Endothelial cell of umbilical vein (primary cell): ENCODE measurements at regions of chr1 and their contacts with region 1.

Region 1: GRCh38 chr1:193019442-193020026 is 39.6 kb downstream of the UCHL5 start:
- DNase-seq: peak; percentile 76
- H3K4me3 ChIP-seq: no peak overlapping the region
- H3K27ac ChIP-seq: no peak overlapping the region
- H3K4me1 ChIP-seq: peaks cover 4% of the 10 kb centered on the region
- H3K27me3 ChIP-seq: no peaks in the 10 kb centered on the region
- CTCF ChIP-seq: peak; percentile 12 to 19
- POLR2A ChIP-seq: no peak

Region 2: DNA sequence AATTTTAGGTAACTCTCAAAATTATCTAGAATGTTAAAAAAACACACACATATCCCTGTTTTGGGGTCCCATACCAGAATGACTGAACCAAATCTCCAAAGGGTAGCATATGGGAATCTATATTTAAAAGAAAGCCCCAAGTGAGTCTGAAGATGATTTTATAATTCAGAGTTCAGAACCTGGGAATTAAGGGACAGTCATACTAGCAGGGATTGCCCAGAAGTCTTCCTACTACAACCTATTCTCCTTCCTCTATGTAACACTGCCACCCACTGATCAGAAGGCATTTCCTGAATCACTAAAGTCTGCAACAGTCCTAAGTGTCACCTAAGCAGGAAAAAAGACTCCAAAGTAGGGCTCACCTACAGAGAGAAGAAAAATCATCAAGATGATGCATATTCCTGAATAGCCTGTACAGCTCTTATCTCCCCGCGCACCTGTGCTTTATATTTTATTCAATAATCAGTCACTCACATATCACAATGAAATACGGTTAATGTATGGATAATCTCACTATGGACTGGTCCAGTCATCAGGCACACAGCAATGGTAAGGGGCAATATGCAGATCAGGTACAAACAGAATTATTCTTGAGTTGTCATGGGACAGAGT is 439.1 kb before region 1 on chr1:
- CTCF ChIA-PET with region 1: interaction called, 5 read pairs
- POLR2A ChIA-PET with region 1: no interaction called
- dilution Hi-C with region 1: no loop called
- intact Hi-C with region 1: loop called (anchors 10 kb)
- DNase-seq: peak; percentile 75
- H3K4me3 ChIP-seq: no peak overlapping the region
- H3K27ac ChIP-seq: no peak overlapping the region
- H3K4me1 ChIP-seq: no peaks in the 10 kb centered on the region
- H3K27me3 ChIP-seq: no peaks in the 10 kb centered on the region
- CTCF ChIP-seq: peak; percentile 25 to 35
- POLR2A ChIP-seq: no peak

Region 3: GRCh38 chr1:192817246-192817645 is 202.3 kb before region 1 on chr1:
- CTCF ChIA-PET with region 1: interaction called, 550 read pairs
- POLR2A ChIA-PET with region 1: no interaction called
- dilution Hi-C with region 1: loop called (anchors 25 kb)
- intact Hi-C with region 1: no loop called
- DNase-seq: no peak
- H3K4me3 ChIP-seq: no peak overlapping the region
- H3K27ac ChIP-seq: no peak overlapping the region
- H3K4me1 ChIP-seq: no peaks in the 10 kb centered on the region
- H3K27me3 ChIP-seq: no peaks in the 10 kb centered on the region
- CTCF ChIP-seq: no peak
- POLR2A ChIP-seq: no peak

Region 4: GRCh38 chr1:192892934-192893333 is 126.6 kb before region 1 on chr1:
- CTCF ChIA-PET with region 1: no interaction called
- POLR2A ChIA-PET with region 1: no interaction called
- dilution Hi-C with region 1: no loop called
- intact Hi-C with region 1: no loop called
- DNase-seq: no peak
- H3K4me3 ChIP-seq: no peak overlapping the region
- H3K27ac ChIP-seq: no peak overlapping the region
- H3K4me1 ChIP-seq: no peaks in the 10 kb centered on the region
- H3K27me3 ChIP-seq: no peaks in the 10 kb centered on the region
- CTCF ChIP-seq: no peak
- POLR2A ChIP-seq: no peak

Region 5: DNA sequence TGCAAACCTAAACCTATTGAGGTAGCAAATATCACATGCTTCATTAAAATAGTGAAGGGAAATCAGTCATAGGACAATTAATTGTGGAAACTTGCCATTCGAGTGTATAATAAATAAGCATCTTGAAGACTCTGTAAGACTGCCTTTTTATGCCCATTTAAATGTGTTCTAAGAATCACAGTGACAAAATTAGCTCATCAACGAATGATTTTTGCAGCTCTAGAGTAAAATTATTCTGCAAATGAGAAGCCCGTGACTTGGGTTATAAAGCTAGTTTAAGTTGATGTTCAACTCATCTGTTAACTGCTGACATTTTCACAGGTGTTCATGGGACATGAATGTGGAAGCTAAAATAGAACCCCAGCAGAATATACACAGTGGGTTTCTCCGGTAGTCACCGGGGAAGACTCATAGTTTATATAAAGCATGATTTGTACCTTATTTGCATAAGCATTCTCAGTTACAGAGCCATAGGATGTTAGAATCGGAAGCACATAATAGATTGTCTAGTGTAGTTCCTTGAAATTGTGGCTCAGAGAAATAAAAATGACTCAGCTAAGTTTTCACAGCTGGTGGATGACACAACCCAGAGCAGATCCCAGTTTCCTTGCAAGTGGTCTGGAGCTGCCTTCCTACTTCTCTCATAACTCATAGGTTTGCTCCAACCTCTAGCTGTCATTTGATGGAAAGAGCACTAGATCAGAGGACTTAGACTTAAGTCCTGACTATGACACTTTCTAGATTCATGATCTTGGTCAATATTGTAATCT is 67.7 kb before region 1 on chr1:
- CTCF ChIA-PET with region 1: interaction called, 16 read pairs
- POLR2A ChIA-PET with region 1: no interaction called
- dilution Hi-C with region 1: no loop called
- intact Hi-C with region 1: no loop called
- DNase-seq: peak; percentile 96
- H3K4me3 ChIP-seq: no peak overlapping the region
- H3K27ac ChIP-seq: peak overlapping the region; percentile 82
- H3K4me1 ChIP-seq: peaks cover 22% of the 10 kb centered on the region
- H3K27me3 ChIP-seq: no peaks in the 10 kb centered on the region
- CTCF ChIP-seq: no peak
- POLR2A ChIP-seq: peak; percentile 50

Region 6: GRCh38 chr1:193031438-193031837 is 11.9 kb after region 1 on chr1:
- CTCF ChIA-PET with region 1: interaction called, 30 read pairs
- POLR2A ChIA-PET with region 1: no interaction called
- dilution Hi-C with region 1: no loop called
- intact Hi-C with region 1: no loop called
- DNase-seq: peak; percentile 38
- H3K4me3 ChIP-seq: no peak overlapping the region
- H3K27ac ChIP-seq: no peak overlapping the region
- H3K4me1 ChIP-seq: no peaks in the 10 kb centered on the region
- H3K27me3 ChIP-seq: no peaks in the 10 kb centered on the region
- CTCF ChIP-seq: peak; percentile 5 to 9
- POLR2A ChIP-seq: no peak